Activated CD4-positive, alpha-beta T cell treated with anti-CD3 and anti-CD28 coated beads for 36 hours (primary cell): ENCODE measurements at regions of chr12 and their contacts with region 1.

Region 1: DNA sequence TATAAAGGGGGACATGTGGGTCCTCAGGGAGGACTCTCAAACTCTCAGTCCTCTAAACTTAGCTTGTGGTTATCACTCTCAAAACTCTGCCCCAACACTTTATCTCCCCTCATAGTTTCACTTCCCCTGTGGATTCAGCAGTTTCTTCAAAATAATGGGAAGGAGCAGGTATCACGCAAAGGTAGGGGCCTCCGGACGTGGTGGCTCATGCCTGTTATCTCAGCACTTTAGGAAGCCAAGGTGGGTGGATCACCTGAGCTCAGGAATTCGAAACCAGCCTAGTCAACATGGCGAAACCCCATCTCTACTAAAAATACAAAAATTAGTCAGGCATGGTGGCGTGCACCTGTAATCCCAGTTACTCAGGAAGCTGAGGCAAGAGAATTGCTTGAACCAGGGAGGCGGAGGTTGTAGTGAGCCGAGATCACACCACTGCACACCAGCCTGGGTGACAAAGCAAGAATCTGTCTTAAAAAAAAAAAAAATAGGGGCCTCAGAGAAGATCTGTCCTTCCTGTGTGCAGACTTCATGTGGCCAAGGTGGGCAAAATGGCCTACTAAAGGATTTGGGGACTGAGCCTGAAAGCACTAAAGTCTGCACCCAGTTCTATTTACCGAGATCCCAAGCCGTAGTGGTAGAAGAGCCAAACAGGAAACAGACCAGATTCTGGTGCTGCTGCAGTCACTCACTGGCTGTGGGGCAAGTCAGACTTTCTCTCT is 6.4 kb downstream of the ITGB7 start:
- DNase-seq: peak; percentile 68
- ATAC-seq: peak; percentile 52
- H3K4me3 Mint-ChIP-seq: peak overlapping the region; percentile 44
- H3K27ac Mint-ChIP-seq: peak overlapping the region; percentile 90
- H3K4me1 Mint-ChIP-seq: peaks cover 74% of the 10 kb centered on the region
- H3K27me3 Mint-ChIP-seq: no peaks in the 10 kb centered on the region

Region 2: GRCh38 chr12:53190108-53190729 is 10.4 kb before region 1 on chr12:
- CTCF ChIA-PET with region 1: interaction called, 21 read pairs
- POLR2A ChIA-PET with region 1: no interaction called
- intact Hi-C with region 1: no loop called
- DNase-seq: peak; percentile 74
- ATAC-seq: peak; percentile 94
- H3K4me3 Mint-ChIP-seq: no peak overlapping the region
- H3K27ac Mint-ChIP-seq: peak overlapping the region; percentile 17
- H3K4me1 Mint-ChIP-seq: peaks cover 14% of the 10 kb centered on the region
- H3K27me3 Mint-ChIP-seq: no peaks in the 10 kb centered on the region

Region 3: GRCh38 chr12:53365245-53365904 is 164.8 kb after region 1 on chr12:
- CTCF ChIA-PET with region 1: no interaction called
- POLR2A ChIA-PET with region 1: no interaction called
- intact Hi-C with region 1: no loop called
- DNase-seq: no peak
- ATAC-seq: peak; percentile 82
- H3K4me3 Mint-ChIP-seq: no peak overlapping the region
- H3K27ac Mint-ChIP-seq: peak overlapping the region; percentile 81
- H3K4me1 Mint-ChIP-seq: peaks cover 15% of the 10 kb centered on the region
- H3K27me3 Mint-ChIP-seq: no peaks in the 10 kb centered on the region